CD8-positive, alpha-beta memory T cell (primary cell): ENCODE measurements at regions of chr17 and their contacts with region 1.

Region 1: DNA sequence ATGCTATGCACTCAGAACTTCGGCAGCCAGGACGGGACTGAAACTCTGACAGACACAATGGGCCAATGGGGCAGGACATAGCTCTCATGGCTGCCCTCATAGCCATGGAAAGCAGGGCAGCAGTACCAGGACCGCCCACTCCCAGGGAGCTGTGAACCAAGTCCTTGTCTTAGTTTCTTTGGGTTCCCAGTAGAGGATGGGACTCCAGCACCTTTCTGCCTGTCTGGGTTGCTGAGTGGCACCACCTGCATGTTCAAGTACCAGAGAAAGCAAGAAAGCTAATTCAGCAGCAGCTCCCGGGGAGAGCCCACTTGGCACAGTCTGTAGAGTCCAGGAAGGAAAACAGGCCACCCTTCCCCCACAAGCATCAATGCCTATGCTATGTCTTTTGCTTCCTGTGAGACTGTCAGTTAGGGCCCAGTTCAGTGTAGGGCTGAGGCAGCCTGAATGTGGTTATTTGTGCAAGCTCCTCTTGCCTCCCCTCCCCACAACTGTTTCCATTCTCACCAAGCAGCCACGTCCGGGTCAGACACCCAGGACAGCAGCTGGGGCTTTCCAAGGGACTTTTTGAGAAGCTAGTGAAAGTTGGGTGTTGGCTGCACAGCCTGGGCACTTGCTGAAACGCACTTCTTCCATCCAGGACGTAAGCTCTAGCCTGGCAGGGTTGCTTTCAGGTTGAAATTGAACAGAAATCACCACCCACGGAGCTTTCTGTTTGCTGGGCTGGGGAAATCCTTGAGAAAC is 7.8 kb downstream of the SUPT4H1 start:
- DNase-seq: peak; percentile 77 to 95 (median 85)
- H3K4me3 ChIP-seq: peak overlapping the region; percentile 86
- H3K4me3 Mint-ChIP-seq: peak overlapping the region; percentile 86 to 100 (median 95)
- H3K27ac ChIP-seq: peak overlapping the region; percentile 88
- H3K27ac Mint-ChIP-seq: peak overlapping the region; percentile 92 to 100 (median 99)
- H3K4me1 ChIP-seq: peaks cover 86% of the 10 kb centered on the region
- H3K4me1 Mint-ChIP-seq: peaks cover 75 to 99% (median 97%) of the 10 kb centered on the region in 3 donors
- H3K27me3 ChIP-seq: no peaks in the 10 kb centered on the region
- H3K27me3 Mint-ChIP-seq: no peaks in the 10 kb centered on the region

Region 2: DNA sequence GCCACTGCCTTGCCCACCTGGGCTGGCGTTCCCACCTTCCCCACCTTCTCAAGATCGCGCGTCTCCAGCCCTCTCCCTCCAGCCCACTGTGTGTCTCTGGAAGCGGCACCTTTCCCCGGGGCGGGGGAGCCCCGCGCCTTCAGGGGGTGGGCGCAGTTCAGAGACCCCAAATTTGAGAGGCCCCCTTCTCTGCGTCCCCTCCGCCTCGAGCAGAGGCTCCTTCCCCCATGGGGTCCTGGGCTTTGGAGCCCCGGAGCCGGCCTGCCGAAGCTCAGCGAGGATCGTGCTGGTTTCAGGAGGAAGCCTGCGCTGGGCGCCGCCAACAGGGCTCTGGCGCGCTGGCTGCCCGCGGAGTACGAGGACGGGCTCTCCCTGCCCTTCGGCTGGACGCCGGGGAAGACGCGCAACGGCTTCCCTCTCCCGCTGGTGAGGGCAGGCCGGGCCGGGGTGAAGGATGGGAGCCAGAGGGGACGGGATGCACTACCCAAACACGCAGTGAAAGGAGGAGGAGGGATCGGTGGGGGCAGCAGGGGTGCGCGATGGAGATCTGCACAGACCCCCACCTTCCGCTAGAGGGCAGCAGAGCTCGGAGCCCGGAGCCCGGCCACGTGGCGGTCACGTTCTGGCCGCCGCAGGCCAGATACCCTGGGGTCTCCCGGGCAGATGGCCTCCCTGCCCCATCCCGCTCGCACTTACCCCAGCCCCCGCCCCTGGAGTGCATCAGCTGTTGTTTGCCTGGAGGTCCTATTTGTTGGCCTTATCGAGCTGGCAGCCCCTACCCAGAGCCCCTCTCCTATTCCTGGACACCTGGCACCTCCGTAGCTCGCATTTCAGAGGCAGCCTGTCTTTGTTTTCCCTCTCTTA is 94.7 kb before region 1 on chr17:
- CTCF ChIA-PET with region 1: interaction called, 11 read pairs
- POLR2A ChIA-PET with region 1: no interaction called
- DNase-seq: peak; percentile 64 to 77 (median 69)
- H3K4me3 ChIP-seq: peak overlapping the region; percentile 55
- H3K4me3 Mint-ChIP-seq: peak overlapping the region; percentile 38 to 91 (median 80)
- H3K27ac ChIP-seq: no peak overlapping the region
- H3K27ac Mint-ChIP-seq: peak overlapping the region in 1 of 8 donors; percentile 69
- H3K4me1 ChIP-seq: peaks cover 10% of the 10 kb centered on the region
- H3K4me1 Mint-ChIP-seq: peaks cover 8 to 27% (median 12%) of the 10 kb centered on the region in 3 donors
- H3K27me3 ChIP-seq: no peaks in the 10 kb centered on the region
- H3K27me3 Mint-ChIP-seq: peaks cover 5 to 23% of the 10 kb centered on the region in 2 donors

Region 3: DNA sequence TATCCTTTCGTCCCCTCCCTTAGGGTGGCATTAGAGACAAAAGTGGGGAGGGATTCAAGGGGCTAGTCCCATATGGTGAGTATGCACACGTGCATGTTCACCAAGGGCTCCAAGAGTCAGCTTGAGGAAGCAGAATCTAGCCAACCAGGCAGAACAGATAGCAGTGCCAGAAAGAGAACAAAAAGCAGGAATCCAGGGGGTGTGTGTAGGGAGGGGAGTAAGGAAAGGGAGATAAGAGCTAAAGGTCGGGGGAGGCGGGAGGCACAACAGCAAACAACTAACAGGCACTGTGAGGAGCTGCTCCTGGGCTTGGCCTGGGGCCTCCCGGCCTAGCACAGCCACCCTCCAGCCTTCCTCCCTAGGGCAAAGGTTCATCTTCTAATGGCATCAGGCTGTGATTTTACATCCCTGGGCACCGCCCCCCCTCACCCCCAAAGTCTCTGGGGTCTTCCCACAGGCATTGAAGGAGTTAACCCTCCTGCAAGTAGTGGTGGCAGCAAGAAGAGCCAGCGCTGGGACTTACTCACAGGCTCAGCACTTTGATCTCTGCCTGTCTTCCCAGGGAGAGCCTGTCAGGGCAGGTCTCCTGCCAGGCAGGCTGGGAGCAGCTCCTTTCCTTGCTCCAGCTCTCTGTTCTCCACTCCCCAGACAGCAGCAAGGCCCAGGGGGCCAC is 20.2 kb after region 1 on chr17:
- CTCF ChIA-PET with region 1: interaction called, 12 read pairs
- POLR2A ChIA-PET with region 1: interaction called, 5 read pairs
- DNase-seq: no peak
- H3K4me3 ChIP-seq: no peak overlapping the region
- H3K4me3 Mint-ChIP-seq: no peak overlapping the region
- H3K27ac ChIP-seq: peak overlapping the region; percentile 20
- H3K27ac Mint-ChIP-seq: peak overlapping the region in 2 of 8 donors; percentile 21 to 64
- H3K4me1 ChIP-seq: peaks cover 6% of the 10 kb centered on the region
- H3K4me1 Mint-ChIP-seq: peaks cover 5 to 16% (median 8%) of the 10 kb centered on the region in 3 donors
- H3K27me3 ChIP-seq: no peaks in the 10 kb centered on the region
- H3K27me3 Mint-ChIP-seq: peaks cover 0 to 1% of the 10 kb centered on the region in 2 donors

Region 4: DNA sequence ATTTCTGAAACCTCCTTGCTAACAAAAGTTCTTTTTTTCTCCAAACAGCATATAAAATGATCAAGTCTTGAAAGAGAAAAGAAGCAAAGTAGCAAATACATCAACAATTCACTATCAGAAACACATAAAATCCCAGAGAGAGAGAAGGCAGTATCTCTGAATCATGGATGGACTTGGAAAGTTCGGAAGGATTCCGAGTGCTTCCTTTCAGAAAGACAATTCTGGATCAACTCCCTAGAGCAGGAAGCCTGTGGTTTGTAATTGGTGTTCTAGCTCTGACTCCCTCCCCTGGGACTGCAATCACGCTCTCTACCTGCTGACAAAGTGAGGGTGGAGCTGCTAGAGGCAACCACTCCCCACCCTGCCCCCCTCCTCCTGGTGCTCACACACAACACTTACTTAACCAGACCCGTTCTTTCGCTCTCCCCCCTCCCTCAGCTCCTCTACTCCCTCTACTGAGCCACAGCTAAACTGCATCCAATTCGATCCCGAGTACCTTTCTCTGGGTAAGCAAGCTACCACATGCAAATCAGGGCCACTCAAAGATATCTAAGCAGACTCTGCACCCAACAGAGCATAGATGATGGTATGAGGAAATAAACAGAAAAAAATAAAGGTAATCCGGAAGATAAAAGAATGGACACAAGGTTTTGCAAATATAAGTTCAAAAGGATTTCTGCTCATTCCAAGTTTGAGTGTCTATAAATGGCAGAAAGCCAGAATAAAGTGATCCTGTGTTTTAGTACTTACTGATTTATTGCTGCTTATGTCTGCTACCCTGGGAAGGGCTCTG is 73.3 kb after region 1 on chr17 and contains the start of gene RNF43:
- CTCF ChIA-PET with region 1: interaction called, 23 read pairs
- POLR2A ChIA-PET with region 1: interaction called, 6 read pairs
- DNase-seq: peak; percentile 72 to 93 (median 85)
- H3K4me3 ChIP-seq: peak within 1 kb of the TSS; percentile 15
- H3K4me3 Mint-ChIP-seq: peak within 1 kb of the TSS in 5 of 7 donors; percentile 0 to 37 (median 2)
- H3K27ac ChIP-seq: peak within 1 kb of the TSS; percentile 28
- H3K27ac Mint-ChIP-seq: peak within 1 kb of the TSS; percentile 0 to 88 (median 55)
- H3K4me1 ChIP-seq: peaks cover 15% of the 10 kb centered on the region
- H3K4me1 Mint-ChIP-seq: peaks cover 9 to 19% (median 14%) of the 10 kb centered on the region in 3 donors
- H3K27me3 ChIP-seq: no peaks in the 10 kb centered on the region
- H3K27me3 Mint-ChIP-seq: no peaks in the 10 kb centered on the region
- total RNA-seq, gene RNF43: 0.47 to 1.2 TPM